ENCODE measurements at regions of chr19 and their contacts with region 1.

Region 1: DNA sequence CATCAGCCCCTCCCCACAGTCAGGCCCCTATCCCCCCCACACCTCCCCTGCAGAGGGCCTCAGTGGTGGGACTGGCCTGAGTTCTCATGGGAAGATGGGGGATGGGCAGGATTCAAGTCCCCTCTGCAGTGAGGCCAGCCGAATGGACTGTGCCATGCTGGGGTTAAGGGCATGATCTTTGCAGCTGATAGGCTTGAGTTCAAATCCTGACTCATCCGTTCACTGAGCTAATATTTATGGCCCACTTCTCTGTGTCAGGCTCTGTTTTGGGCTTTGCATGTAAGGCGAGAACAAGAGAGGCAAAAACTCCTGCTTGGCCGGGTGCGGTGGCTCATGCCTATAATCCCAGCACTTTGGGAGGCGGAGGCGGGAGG is 20.7 kb downstream of the MARK4 start:
- DNase-seq: peak; percentile 25
- ATAC-seq: no peak
- H3K4me3 ChIP-seq: no peak overlapping the region
- H3K27ac ChIP-seq: peak overlapping the region; percentile 80
- H3K4me1 ChIP-seq: peaks cover 54% of the 10 kb centered on the region
- H3K27me3 ChIP-seq: no peaks in the 10 kb centered on the region
- CTCF ChIP-seq: no peak
- EP300 ChIP-seq: no peak
- POLR2A ChIP-seq: no peak
- RAD21 ChIP-seq: no peak

Region 2: DNA sequence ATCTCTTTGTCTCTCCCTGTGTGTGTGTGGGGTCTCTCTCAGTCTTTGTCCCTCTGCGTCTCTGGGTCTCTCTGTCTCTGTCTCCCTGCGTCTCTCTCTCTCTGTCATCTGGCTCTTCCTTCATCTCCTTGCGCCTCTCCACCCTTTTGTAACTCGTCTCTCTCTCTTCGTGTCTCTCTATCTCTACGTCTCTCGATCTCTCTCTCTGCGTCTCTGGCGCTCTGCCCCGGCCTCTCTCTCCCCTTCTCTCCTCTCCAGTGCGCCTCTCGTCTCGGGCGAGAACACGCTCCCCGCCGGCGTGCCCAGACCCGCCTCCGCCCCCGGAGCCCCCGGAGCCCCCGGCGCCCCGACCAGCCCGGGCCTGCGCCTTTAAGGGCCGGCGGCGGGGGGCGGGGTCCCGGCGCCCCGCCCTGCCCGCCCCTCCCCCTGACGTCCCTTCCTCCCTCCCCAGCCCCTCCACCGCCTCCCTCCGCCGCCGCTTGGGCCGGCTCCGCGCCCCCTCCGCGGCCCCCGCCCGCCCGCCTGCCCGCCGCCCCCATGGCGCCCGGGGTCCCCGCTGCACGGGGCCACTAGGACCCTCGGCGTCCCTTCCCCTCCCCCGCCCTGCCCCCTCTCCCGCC is 20.8 kb before region 1 on chr19 and contains the start of gene MARK4:
- CTCF ChIA-PET with region 1: no interaction called
- POLR2A ChIA-PET with region 1: no interaction called
- in situ Hi-C with region 1: no loop called
- intact Hi-C with region 1: no loop called
- DNase-seq: no peak
- ATAC-seq: peak; percentile 50
- H3K4me3 ChIP-seq: peak within 1 kb of the TSS; percentile 80 to 91 (median 91)
- H3K27ac ChIP-seq: peak within 1 kb of the TSS; percentile 61
- H3K4me1 ChIP-seq: peaks cover 71% of the 10 kb centered on the region
- H3K27me3 ChIP-seq: no peaks in the 10 kb centered on the region; a peak in 1 of 5 replicates
- CTCF ChIP-seq: no peak
- EP300 ChIP-seq: no peak
- POLR2A ChIP-seq: peak in 1 of 2 experiments; percentile 55; a peak in 2 of 4 replicates
- RAD21 ChIP-seq: no peak
- total RNA-seq, gene MARK4: 7.0 and 7.6 TPM in 2 replicates

Region 3: GRCh38 chr19:45294291-45295029 is 22.7 kb after region 1 on chr19:
- CTCF ChIA-PET with region 1: no interaction called
- POLR2A ChIA-PET with region 1: no interaction called
- in situ Hi-C with region 1: no loop called
- intact Hi-C with region 1: no loop called
- DNase-seq: no peak
- ATAC-seq: no peak; the same call in 2 of the 3 replicates
- H3K4me3 ChIP-seq: no peak overlapping the region
- H3K27ac ChIP-seq: no peak overlapping the region
- H3K4me1 ChIP-seq: peaks cover 10% of the 10 kb centered on the region; the same call in 1 of the 2 replicates
- H3K27me3 ChIP-seq: no peaks in the 10 kb centered on the region
- CTCF ChIP-seq: no peak
- EP300 ChIP-seq: no peak
- POLR2A ChIP-seq: no peak
- RAD21 ChIP-seq: no peak

Region 4: DNA sequence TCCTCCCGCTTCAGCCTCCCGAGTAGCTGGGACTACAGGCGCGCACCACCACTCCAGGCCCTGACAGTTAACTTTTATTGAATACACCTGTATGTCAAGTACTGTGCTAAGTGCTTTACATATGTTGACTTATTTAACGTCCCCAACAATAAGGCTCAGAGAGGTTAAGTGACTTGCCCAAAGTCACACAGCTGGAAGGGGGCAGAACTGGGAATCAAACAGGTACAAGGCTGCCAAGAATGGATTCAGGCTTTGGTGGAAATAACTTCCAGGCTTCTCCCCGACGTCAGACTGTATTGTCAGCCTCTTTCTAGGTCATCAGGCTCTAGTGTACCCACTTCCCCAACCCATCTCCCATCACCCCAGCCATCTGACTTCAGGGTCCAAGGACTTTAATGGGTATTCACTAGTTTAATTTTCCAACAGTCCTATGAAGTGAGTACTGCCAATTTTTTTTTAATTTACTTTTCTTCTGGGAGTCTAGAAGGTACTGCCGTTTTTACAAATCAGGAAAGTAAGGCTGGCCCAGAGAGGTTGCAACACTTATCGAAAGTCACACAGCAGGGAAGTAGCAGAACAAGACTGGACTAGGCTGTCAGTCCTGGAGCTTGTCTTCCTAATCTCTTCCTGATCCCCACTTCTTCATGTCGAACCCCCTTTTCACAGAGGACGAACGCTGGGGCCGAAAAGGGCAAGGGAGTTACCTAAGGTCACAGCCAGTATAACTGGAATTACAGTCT is 55.9 kb after region 1 on chr19:
- CTCF ChIA-PET with region 1: no interaction called
- POLR2A ChIA-PET with region 1: no interaction called
- in situ Hi-C with region 1: no loop called
- intact Hi-C with region 1: loop called (anchors 2 kb)
- DNase-seq: no peak
- ATAC-seq: no peak
- H3K4me3 ChIP-seq: no peak overlapping the region
- H3K27ac ChIP-seq: no peak overlapping the region
- H3K4me1 ChIP-seq: peaks cover 44% of the 10 kb centered on the region
- H3K27me3 ChIP-seq: peaks cover 2 to 30% of the 10 kb centered on the region in 2 experiments; a peak in 3 of 5 replicates
- CTCF ChIP-seq: no peak
- EP300 ChIP-seq: no peak
- POLR2A ChIP-seq: no peak
- RAD21 ChIP-seq: no peak

Region 5: GRCh38 chr19:45469132-45469944 is 197.6 kb after region 1 on chr19:
- CTCF ChIA-PET with region 1: no interaction called
- POLR2A ChIA-PET with region 1: no interaction called
- in situ Hi-C with region 1: no loop called
- intact Hi-C with region 1: no loop called
- DNase-seq: peak; percentile 87
- ATAC-seq: peak; percentile 76
- H3K4me3 ChIP-seq: peak overlapping the region; percentile 76 to 91 (median 89)
- H3K27ac ChIP-seq: peak overlapping the region; percentile 96
- H3K4me1 ChIP-seq: peaks cover 28% of the 10 kb centered on the region
- H3K27me3 ChIP-seq: peaks cover 0 to 3% of the 10 kb centered on the region in 2 experiments; a peak in 2 of 5 replicates
- CTCF ChIP-seq: peak; percentile 41; the same call in 1 of the 2 replicates
- EP300 ChIP-seq: no peak
- POLR2A ChIP-seq: peak; percentile 64 to 91
- RAD21 ChIP-seq: 0 out of 2 replicates have a peak, but pooled peaks have one; percentile 13